CD4-positive, alpha-beta memory T cell (primary cell): ENCODE measurements at regions of chr11 and their contacts with region 1.

Region 1: DNA sequence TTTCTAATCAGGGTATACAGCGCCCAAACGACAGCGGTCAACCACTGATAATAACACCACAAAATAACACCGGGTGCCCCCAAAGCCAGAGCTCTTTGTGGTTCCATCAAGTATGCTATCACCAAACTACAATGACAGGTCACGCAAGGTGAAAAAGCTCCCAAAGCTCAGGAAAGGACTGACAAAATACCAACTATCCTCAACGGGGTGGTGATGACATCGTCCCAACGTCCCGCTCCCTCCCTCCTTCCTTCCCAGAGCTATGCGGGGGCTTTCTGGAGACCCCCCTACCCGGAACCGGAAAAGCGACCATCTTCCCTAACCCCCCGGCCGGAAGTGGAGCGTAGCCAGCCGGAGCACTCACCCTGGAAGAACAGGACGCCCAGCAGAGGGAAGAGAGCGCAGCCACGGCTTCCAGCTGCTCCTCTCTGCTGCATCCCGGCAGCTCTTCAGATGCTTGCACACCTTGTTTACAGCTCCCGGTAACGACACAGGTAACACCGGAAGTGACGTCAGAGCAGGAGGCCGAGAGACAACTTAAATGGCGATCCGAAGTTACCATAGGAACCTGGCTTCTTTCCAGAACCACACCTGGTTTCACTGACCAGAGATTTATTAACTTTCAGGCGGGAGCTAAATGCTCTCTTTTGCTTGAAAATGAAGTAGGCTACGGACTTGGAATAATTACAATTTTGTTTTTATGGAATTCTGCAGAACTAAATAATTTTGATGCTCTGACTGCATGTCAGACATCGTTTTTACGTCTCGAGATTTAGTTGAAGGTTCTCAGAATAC is at the start of gene MPZL3:
- DNase-seq: peak; percentile 87 to 96 (median 91)
- H3K4me3 ChIP-seq: peak within 1 kb of the TSS; percentile 57 to 94
- H3K4me3 Mint-ChIP-seq: peak within 1 kb of the TSS; percentile 95 to 99 (median 98)
- H3K27ac ChIP-seq: peak within 1 kb of the TSS; percentile 94
- H3K27ac Mint-ChIP-seq: peak within 1 kb of the TSS; percentile 99 to 100 (median 99)
- H3K4me1 ChIP-seq: peaks cover 43% of the 10 kb centered on the region
- H3K4me1 Mint-ChIP-seq: peaks cover 26 to 53% (median 39%) of the 10 kb centered on the region in 4 donors
- H3K27me3 ChIP-seq: no peaks in the 10 kb centered on the region
- H3K27me3 Mint-ChIP-seq: peaks cover 0 to 2% of the 10 kb centered on the region in 2 donors
- total RNA-seq, gene MPZL3: 29.9 to 32.0 TPM

Region 2: DNA sequence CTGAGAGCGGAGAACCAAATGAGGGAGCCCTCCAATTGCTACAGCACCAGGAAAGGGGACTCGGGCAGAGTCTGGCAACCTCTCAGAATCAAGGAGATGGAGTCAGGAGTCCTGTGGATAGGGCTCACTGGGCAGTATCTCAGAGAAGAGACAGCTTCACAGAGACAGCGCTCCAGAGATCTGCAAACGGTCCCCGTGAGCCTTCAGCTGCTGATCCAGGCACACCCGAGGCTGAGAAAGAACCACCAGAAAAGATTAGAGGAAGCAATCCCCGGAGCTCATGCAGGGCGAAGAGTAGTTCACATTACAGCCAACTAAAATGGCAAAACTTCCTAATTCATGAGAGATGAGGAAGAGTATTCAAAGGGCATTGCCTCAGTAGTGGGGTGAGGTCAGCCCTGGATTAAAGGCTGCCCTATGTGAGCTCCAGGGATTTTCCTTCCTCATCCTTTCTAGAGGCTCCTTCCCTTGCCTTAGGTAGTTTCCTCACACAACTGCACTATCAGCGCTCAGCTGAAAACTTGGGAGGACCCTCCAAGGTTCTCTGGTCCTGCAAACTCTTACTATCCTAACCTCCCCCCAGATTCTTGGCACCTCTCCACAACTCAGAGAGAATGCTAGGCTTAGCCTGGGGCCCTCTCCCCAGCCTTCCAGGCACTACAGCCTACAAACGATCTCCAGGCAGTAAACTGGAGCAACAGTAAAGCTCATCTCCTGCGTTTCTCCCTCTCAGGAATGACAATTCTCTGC is 123.2 kb before region 1 on chr11:
- CTCF ChIA-PET with region 1: no interaction called
- POLR2A ChIA-PET with region 1: no interaction called
- intact Hi-C with region 1: no loop called
- DNase-seq: no peak
- H3K4me3 ChIP-seq: no peak overlapping the region
- H3K4me3 Mint-ChIP-seq: no peak overlapping the region
- H3K27ac ChIP-seq: no peak overlapping the region
- H3K27ac Mint-ChIP-seq: peak overlapping the region in 1 of 7 donors; percentile 37
- H3K4me1 ChIP-seq: no peaks in the 10 kb centered on the region
- H3K4me1 Mint-ChIP-seq: no peaks in the 10 kb centered on the region
- H3K27me3 ChIP-seq: no peaks in the 10 kb centered on the region
- H3K27me3 Mint-ChIP-seq: peaks cover 6 to 12% of the 10 kb centered on the region in 2 donors

Region 3: GRCh38 chr11:118211006-118211405 is 41.0 kb before region 1 on chr11:
- CTCF ChIA-PET with region 1: interaction called, 7 read pairs
- POLR2A ChIA-PET with region 1: interaction called, 37 read pairs
- intact Hi-C with region 1: no loop called
- DNase-seq: no peak
- H3K4me3 ChIP-seq: no peak overlapping the region
- H3K4me3 Mint-ChIP-seq: no peak overlapping the region
- H3K27ac ChIP-seq: no peak overlapping the region
- H3K27ac Mint-ChIP-seq: peak overlapping the region in 2 of 7 donors; percentile 19 to 68
- H3K4me1 ChIP-seq: peaks cover 44% of the 10 kb centered on the region
- H3K4me1 Mint-ChIP-seq: peaks cover 44 to 57% (median 51%) of the 10 kb centered on the region in 4 donors
- H3K27me3 ChIP-seq: no peaks in the 10 kb centered on the region
- H3K27me3 Mint-ChIP-seq: no peaks in the 10 kb centered on the region

Region 4: DNA sequence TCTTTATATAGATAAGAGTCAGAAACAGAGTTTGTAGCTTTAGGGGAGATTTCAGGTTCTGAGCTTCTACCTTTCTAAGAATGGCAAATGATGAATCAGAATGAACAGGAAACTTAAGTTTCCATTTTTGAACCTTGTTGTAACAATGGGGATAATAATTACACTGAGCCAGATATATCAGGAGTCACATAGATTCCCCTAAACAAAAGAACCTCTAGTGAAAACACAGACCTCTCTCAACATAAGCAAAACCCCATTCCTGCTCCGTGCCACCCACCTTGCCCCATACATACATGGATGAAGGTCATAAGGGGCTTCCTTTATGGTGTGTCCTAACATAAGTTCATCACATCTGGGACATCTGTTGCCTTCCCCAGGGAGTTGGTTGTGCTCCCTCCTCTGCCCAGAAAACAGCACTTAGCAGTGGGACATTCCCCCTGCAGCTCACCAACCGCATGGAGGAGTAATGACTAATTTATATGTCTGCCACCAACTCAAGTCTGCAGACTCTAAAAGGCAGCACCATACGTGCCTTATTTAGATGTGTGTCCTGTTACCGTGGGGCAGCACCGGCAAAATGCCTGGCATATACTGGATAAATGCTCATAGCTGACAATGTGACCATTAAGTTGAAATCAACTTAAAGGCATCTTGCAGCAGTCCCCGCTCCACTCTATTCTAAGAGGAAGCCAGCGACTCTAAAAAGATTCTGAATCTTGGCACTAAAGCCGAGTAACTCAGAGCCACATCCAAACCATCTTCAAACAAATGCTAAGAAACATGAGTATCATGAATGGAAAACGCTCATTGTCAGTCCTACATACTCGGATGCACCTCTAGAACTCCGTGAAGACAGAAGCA is 35.2 kb before region 1 on chr11:
- CTCF ChIA-PET with region 1: interaction called, 7 read pairs
- POLR2A ChIA-PET with region 1: interaction called, 37 read pairs
- intact Hi-C with region 1: no loop called
- DNase-seq: peak in 1 of 5 donors; percentile 73
- H3K4me3 ChIP-seq: peak overlapping the region; percentile 2 to 35
- H3K4me3 Mint-ChIP-seq: peak overlapping the region; percentile 73 to 91 (median 87)
- H3K27ac ChIP-seq: peak overlapping the region; percentile 50
- H3K27ac Mint-ChIP-seq: peak overlapping the region; percentile 90 to 96 (median 93)
- H3K4me1 ChIP-seq: peaks cover 90% of the 10 kb centered on the region
- H3K4me1 Mint-ChIP-seq: peaks cover 62 to 100% (median 84%) of the 10 kb centered on the region in 4 donors
- H3K27me3 ChIP-seq: no peaks in the 10 kb centered on the region
- H3K27me3 Mint-ChIP-seq: no peaks in the 10 kb centered on the region

Region 5: GRCh38 chr11:118240999-118241768 is 10.9 kb before region 1 on chr11:
- CTCF ChIA-PET with region 1: interaction called, 8 read pairs
- POLR2A ChIA-PET with region 1: interaction called, 71 read pairs
- intact Hi-C with region 1: loop called (anchors 1 kb)
- DNase-seq: peak; percentile 59 to 91 (median 67)
- H3K4me3 ChIP-seq: peak overlapping the region in 1 of 2 donors; percentile 21
- H3K4me3 Mint-ChIP-seq: peak overlapping the region; percentile 46 to 79 (median 72)
- H3K27ac ChIP-seq: peak overlapping the region; percentile 65
- H3K27ac Mint-ChIP-seq: peak overlapping the region; percentile 87 to 98 (median 93)
- H3K4me1 ChIP-seq: peaks cover 68% of the 10 kb centered on the region
- H3K4me1 Mint-ChIP-seq: peaks cover 64 to 83% (median 74%) of the 10 kb centered on the region in 4 donors
- H3K27me3 ChIP-seq: no peaks in the 10 kb centered on the region
- H3K27me3 Mint-ChIP-seq: no peaks in the 10 kb centered on the region

Region 6: GRCh38 chr11:118304568-118305248 is 52.7 kb after region 1 on chr11 and contains the start of gene CD3E:
- CTCF ChIA-PET with region 1: no interaction called
- POLR2A ChIA-PET with region 1: interaction called, 17 read pairs
- intact Hi-C with region 1: no loop called
- DNase-seq: peak; percentile 76 to 83 (median 79)
- H3K4me3 ChIP-seq: peak within 1 kb of the TSS; percentile 96 to 97
- H3K4me3 Mint-ChIP-seq: peak within 1 kb of the TSS; percentile 99 to 100 (median 100)
- H3K27ac ChIP-seq: peak within 1 kb of the TSS; percentile 91
- H3K27ac Mint-ChIP-seq: peak within 1 kb of the TSS; percentile 98 to 100 (median 99)
- H3K4me1 ChIP-seq: peaks cover 68% of the 10 kb centered on the region
- H3K4me1 Mint-ChIP-seq: peaks cover 46 to 94% (median 66%) of the 10 kb centered on the region in 4 donors
- H3K27me3 ChIP-seq: no peaks in the 10 kb centered on the region
- H3K27me3 Mint-ChIP-seq: no peaks in the 10 kb centered on the region
- total RNA-seq, gene CD3E: 581 to 618 TPM

Region 7: DNA sequence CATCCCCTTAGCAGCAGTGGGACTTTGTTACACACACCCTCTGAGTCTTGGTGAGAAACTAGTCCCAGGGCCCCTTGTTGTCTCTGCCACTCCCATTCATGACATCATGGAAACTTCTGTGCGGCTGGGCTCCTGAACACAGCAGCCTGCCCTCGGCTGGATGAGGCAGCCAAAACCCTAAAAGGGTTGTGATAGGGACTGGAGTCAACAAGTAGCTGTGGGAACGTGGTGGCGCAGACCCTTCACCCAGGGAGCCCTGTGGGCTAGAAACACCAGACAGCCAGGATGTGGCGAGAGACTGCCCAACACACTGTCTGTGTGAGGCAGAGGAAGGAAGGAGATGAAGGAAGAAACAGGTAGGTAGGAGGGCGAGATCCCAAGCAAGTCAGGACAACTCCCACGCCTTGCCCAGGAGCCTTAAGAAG is 86.6 kb after region 1 on chr11:
- CTCF ChIA-PET with region 1: no interaction called
- POLR2A ChIA-PET with region 1: interaction called, 10 read pairs
- intact Hi-C with region 1: no loop called
- DNase-seq: peak; percentile 87 to 98 (median 90)
- H3K4me3 ChIP-seq: peak overlapping the region; percentile 89 to 97
- H3K4me3 Mint-ChIP-seq: peak overlapping the region; percentile 91 to 100 (median 97)
- H3K27ac ChIP-seq: peak overlapping the region; percentile 93
- H3K27ac Mint-ChIP-seq: peak overlapping the region; percentile 98 to 100 (median 99)
- H3K4me1 ChIP-seq: peaks cover 75% of the 10 kb centered on the region
- H3K4me1 Mint-ChIP-seq: peaks cover 32 to 79% (median 55%) of the 10 kb centered on the region in 4 donors
- H3K27me3 ChIP-seq: no peaks in the 10 kb centered on the region
- H3K27me3 Mint-ChIP-seq: peaks cover 0 to 1% of the 10 kb centered on the region in 2 donors

Region 8: DNA sequence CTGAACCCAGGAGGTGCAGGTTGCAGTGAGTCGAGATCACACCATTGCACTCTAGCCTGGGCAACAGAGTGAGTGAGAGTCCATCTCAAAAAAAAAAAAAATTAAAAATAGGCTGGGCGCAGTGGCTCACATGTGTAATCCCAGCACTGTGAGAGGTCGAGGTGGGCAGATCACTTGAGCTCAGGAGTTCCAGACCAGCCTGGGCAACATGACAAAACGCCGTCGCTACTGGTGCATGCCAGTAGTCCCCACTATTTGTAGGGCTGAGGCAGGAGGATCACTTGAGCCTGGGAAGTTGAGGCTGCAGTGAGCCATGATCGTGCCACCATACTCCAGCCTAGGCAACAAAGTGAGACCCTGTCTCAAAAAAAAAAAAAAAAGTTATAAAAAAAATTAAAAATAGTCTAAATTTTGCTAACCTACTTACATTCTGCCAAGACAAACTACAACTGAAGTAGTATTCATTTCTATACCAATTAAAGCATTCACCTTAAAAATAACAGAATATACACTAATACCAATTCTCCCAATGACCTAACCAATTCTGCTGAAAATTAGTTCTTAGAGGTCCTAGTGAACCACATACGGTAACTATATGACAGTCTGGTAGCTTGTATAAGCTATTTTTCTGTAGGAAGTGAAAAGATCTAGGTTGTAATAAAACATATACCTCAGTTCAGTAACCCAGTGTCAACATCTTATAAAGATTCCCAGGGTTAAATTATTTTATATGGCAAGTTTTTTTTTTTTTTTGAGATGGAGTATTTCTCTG is 531.9 kb after region 1 on chr11:
- CTCF ChIA-PET with region 1: no interaction called
- POLR2A ChIA-PET with region 1: no interaction called
- intact Hi-C with region 1: no loop called
- DNase-seq: no peak
- H3K4me3 ChIP-seq: no peak overlapping the region
- H3K4me3 Mint-ChIP-seq: peak overlapping the region in 7 of 8 donors; percentile 27 to 82 (median 60)
- H3K27ac ChIP-seq: no peak overlapping the region
- H3K27ac Mint-ChIP-seq: peak overlapping the region in 5 of 7 donors; percentile 29 to 78 (median 65)
- H3K4me1 ChIP-seq: peaks cover 88% of the 10 kb centered on the region
- H3K4me1 Mint-ChIP-seq: peaks cover 26 to 82% (median 46%) of the 10 kb centered on the region in 4 donors
- H3K27me3 ChIP-seq: no peaks in the 10 kb centered on the region
- H3K27me3 Mint-ChIP-seq: no peaks in the 10 kb centered on the region